PC-9 (cell line): ENCODE measurements at regions of chr10 and their contacts with region 1.

Region 1: DNA sequence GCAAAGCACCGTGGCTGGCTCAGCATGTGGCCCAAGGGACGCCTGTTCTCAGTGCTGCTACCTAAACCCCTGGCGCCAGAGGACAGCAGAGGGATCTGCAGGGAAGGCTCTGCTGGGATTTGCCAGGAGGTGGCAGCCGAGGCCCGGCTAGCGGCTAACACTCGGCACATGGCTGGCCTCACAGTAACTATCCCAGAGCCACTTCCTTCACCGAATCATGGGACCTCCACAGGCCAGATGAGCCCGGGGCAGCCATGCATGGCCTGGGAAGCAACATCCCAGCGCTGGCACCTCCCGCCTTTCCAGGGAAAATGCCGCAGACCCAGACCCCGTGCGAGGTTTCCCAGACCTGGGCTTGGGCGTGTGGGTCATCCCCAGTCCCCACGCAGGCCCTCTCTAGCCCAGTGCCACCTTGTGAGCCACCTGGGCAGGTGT is 36.4 kb downstream of the DPYSL4 start:
- DNase-seq: peak; percentile 58 to 75
- H3K4me3 ChIP-seq: no peak overlapping the region
- H3K27ac ChIP-seq: no peak overlapping the region
- H3K4me1 ChIP-seq: no peaks in the 10 kb centered on the region
- H3K27me3 ChIP-seq: no peaks in the 10 kb centered on the region
- CTCF ChIP-seq: peak; percentile 84

Region 2: DNA sequence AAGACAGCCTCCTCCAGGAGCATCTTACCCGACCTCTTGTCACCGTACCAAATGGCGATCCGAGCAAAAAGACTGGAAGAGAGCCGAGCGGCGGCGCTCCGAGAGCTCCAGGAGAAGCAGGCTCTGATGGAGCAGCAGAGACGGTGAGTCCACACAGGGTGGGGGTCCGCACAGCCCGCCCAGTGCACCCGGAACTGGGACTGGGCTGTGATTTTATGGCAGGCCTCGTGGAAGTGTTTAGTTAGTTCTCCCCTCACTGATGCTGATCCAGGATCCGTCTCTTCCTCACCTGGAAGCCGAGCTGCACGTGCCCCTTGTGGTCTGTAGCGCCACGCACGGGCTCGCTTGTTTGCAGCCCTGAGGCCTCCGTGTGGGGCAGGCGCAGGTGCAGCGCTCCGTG is 128.4 kb after region 1 on chr10:
- CTCF ChIA-PET with region 1: interaction called, 3 read pairs
- POLR2A ChIA-PET with region 1: no interaction called
- intact Hi-C with region 1: loop called (anchors 1 kb)
- DNase-seq: no peak
- H3K4me3 ChIP-seq: no peak overlapping the region
- H3K27ac ChIP-seq: no peak overlapping the region
- H3K4me1 ChIP-seq: no peaks in the 10 kb centered on the region
- H3K27me3 ChIP-seq: no peaks in the 10 kb centered on the region
- CTCF ChIP-seq: no peak

Region 3: DNA sequence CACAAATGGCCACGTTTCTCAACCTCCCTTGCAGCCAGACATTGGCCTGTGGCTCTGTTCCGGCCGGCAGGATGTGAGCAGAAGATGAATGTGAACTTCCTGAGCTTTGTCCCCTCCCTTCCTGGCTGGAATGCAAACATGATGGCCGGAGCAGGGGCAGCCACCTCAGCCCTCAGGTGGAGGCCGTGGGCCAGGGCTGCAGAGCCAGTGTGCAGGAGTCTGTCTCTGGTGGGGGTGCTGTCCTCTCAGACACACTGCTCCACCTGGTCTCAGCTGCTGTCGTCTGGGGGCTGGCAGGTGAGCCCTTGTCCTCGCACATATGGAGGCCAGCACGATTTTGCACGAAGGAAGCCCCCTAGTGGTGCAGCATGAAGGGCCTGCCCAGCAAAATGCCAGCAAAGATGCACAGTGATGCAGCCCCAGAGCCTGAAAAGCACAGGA is 148.5 kb after region 1 on chr10:
- CTCF ChIA-PET with region 1: interaction called, 8 read pairs
- POLR2A ChIA-PET with region 1: no interaction called
- intact Hi-C with region 1: loop called (anchors 5 kb)
- DNase-seq: no peak
- H3K4me3 ChIP-seq: no peak overlapping the region
- H3K27ac ChIP-seq: no peak overlapping the region
- H3K4me1 ChIP-seq: no peaks in the 10 kb centered on the region
- H3K27me3 ChIP-seq: no peaks in the 10 kb centered on the region
- CTCF ChIP-seq: peak; percentile 58; the same call in 1 of the 2 replicates

Region 4: GRCh38 chr10:132387764-132388210 is 164.6 kb after region 1 on chr10:
- CTCF ChIA-PET with region 1: no interaction called
- POLR2A ChIA-PET with region 1: no interaction called
- intact Hi-C with region 1: loop called (anchors 1 kb)
- DNase-seq: peak in 1 of 2 experiments; percentile 64
- H3K4me3 ChIP-seq: no peak overlapping the region
- H3K27ac ChIP-seq: no peak overlapping the region
- H3K4me1 ChIP-seq: peaks cover under 1% of the 10 kb centered on the region
- H3K27me3 ChIP-seq: no peaks in the 10 kb centered on the region
- CTCF ChIP-seq: peak; percentile 61